Activated CD4-positive, alpha-beta T cell treated with anti-CD3 and anti-CD28 coated beads, Interleukin-2, amount 10 ng/mL, durations not matched to agents 24 days and 14 days (primary cell): ENCODE measurements at regions of chr5 and their contacts with region 1.

Region 1: DNA sequence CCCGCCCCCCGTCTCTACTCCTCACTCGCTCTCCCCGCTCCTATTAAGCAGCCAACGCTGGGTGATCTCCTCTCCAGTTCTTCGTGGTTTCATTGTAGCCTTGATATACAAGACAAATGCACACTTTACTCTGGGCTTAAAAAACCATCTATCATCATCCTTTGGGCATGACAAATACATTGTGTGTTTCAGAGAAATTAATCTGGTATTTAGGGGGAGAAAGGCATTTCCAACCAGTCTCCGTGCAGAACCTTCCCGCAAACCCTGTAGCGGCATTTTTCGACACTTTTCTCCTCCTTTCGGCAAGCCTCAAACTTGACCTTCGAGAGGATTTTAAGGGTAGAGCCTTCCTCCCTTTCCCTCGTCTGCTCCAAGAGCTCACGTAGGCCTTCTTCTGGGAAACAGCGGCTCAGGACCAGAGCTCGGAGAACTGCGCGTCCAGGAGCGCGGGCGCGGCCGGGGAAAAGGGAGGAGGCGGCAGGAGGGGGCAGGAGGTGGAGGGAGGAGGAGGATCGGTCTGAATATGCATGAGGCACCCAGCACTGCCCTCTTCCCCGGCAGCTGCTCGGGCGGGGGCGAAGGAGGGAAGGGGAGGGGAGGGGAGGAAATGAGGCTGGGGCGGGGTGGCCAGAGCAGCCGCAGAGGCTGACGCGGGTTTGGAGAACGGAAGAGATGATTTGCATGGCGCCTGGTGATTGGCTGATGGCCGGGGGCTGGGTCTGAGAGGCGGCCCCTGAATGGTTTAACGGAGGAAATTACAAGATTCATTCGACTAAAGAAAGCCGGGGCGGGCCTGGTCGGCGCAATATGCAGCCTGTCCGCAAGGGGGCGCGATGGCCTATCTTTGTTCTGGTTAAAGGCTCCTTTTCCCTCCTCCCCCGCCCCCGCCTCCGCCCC is 127.5 kb downstream of the TMEM161B start:
- DNase-seq: peak; percentile 97
- H3K4me3 Mint-ChIP-seq: no peak overlapping the region
- H3K27ac Mint-ChIP-seq: no peak overlapping the region
- H3K4me1 Mint-ChIP-seq: peaks cover 20% of the 10 kb centered on the region
- H3K27me3 Mint-ChIP-seq: peaks cover 38% of the 10 kb centered on the region

Region 2: GRCh38 chr5:87780831-87781760 is 360.0 kb before region 1 on chr5:
- intact Hi-C with region 1: loop called (anchors 10 kb)
- DNase-seq: peak; percentile 92
- H3K4me3 Mint-ChIP-seq: no peak overlapping the region
- H3K27ac Mint-ChIP-seq: no peak overlapping the region
- H3K4me1 Mint-ChIP-seq: peaks cover 2% of the 10 kb centered on the region
- H3K27me3 Mint-ChIP-seq: peaks cover 12% of the 10 kb centered on the region

Region 3: GRCh38 chr5:87909382-87909781 is 231.7 kb before region 1 on chr5:
- intact Hi-C with region 1: no loop called
- DNase-seq: no peak
- H3K4me3 Mint-ChIP-seq: no peak overlapping the region
- H3K27ac Mint-ChIP-seq: no peak overlapping the region
- H3K4me1 Mint-ChIP-seq: no peaks in the 10 kb centered on the region
- H3K27me3 Mint-ChIP-seq: no peaks in the 10 kb centered on the region

Region 4: GRCh38 chr5:88251048-88251711 is 110.1 kb after region 1 on chr5:
- intact Hi-C with region 1: loop called (anchors 2 kb)
- DNase-seq: peak; percentile 64
- H3K4me3 Mint-ChIP-seq: peak overlapping the region; percentile 10
- H3K27ac Mint-ChIP-seq: peak overlapping the region; percentile 84
- H3K4me1 Mint-ChIP-seq: peaks cover 41% of the 10 kb centered on the region
- H3K27me3 Mint-ChIP-seq: no peaks in the 10 kb centered on the region

Region 5: GRCh38 chr5:88502179-88503040 is 361.3 kb after region 1 on chr5:
- intact Hi-C with region 1: loop called (anchors 5 kb)
- DNase-seq: peak; percentile 73
- H3K4me3 Mint-ChIP-seq: peak overlapping the region; percentile 82
- H3K27ac Mint-ChIP-seq: peak overlapping the region; percentile 81
- H3K4me1 Mint-ChIP-seq: peaks cover 16% of the 10 kb centered on the region
- H3K27me3 Mint-ChIP-seq: peaks cover 15% of the 10 kb centered on the region

Region 6: GRCh38 chr5:88680253-88681132 is 539.4 kb after region 1 on chr5:
- intact Hi-C with region 1: loop called (anchors 2 kb)
- DNase-seq: peak; percentile 94
- H3K4me3 Mint-ChIP-seq: peak overlapping the region; percentile 58
- H3K27ac Mint-ChIP-seq: no peak overlapping the region
- H3K4me1 Mint-ChIP-seq: peaks cover 19% of the 10 kb centered on the region
- H3K27me3 Mint-ChIP-seq: peaks cover 82% of the 10 kb centered on the region